GM13977 (cell line): ENCODE measurements at regions of chr1 and their contacts with region 1.

Region 1: DNA sequence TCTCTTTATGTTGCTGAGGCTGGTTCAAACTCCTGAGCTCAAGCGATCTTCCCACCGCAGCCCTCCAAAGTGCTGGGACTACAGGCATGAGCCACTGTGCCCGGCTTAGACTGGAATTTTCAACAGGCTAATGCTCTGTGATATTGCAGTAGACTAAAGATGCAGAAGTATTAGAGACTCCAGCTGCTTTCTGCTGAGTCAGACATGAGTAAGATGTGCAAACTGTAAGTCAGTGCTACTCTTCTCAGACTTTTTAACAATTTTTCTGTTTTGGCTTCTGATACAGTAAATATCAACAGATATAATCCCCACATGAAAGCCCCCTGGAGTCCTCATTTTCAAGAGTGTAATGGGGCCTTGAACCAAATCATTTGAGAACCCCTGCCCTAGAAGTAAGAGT is 29.3 kb upstream of the NLRP3 start:
- DNase-seq: no peak
- CTCF ChIP-seq: no peak

Region 2: DNA sequence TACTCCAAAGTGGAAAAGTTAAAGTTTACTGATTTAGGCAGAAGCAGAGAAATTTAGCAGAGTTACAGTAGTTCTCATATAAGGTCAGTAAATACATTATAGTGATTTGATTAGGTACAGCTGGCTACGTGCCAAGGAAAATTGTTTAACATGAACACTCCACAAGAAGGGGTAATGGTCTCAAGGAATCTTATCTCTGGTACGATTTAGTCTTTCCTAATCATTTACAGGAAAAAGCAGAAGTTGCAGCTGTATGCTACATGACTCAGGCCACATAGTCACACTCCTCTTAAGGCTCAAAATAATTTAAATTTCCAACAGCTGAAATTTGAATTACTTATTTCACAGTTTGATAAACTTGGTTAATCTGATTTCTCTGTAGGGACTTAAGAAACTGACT is 108.1 kb after region 1 on chr1:
- in situ Hi-C with region 1: loop called (anchors 10 kb)
- DNase-seq: no peak
- CTCF ChIP-seq: no peak